Posterior vena cava (tissue), 2 donors: ENCODE measurements at regions of chr2 and their contacts with region 1.

Region 1: GRCh38 chr2:62369496-62370202 is 136.3 kb downstream of the TMEM17 start:
- DNase-seq: no peak

Region 2: DNA sequence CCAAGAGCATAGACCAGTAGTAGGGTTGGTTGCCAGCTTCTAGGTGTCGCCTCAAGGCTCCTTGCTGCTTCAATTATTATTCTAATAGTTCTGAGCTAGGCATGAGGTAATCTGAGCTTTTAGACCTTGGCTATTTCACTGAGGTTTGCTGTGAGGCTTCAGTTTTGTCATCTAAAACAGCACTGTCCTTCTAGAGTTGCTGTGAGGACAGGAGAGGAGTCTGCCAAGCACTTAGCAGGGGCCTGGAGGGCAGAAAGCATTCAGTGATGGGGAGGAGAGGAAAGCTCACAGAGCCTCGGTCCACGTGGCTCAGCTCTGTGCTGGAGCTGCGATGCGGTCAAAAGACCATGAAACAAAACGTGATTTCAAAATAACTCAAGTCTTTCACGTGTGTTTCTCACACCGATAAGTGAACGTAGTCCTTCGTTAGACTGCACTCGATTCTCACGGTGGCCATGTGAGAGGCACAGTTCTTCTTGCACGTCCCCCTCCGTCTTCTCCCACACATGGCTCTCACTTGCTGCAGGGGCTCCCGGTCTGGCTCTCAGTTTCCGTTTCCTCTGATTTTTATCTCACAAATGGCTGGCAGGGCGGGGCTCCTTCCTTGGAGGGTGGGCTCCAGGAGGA is 60.1 kb before region 1 on chr2:
- intact Hi-C with region 1: no loop called
- DNase-seq: no peak

Region 3: GRCh38 chr2:62406573-62407043 is 37.0 kb after region 1 on chr2:
- intact Hi-C with region 1: no loop called
- DNase-seq: no peak

Region 4: DNA sequence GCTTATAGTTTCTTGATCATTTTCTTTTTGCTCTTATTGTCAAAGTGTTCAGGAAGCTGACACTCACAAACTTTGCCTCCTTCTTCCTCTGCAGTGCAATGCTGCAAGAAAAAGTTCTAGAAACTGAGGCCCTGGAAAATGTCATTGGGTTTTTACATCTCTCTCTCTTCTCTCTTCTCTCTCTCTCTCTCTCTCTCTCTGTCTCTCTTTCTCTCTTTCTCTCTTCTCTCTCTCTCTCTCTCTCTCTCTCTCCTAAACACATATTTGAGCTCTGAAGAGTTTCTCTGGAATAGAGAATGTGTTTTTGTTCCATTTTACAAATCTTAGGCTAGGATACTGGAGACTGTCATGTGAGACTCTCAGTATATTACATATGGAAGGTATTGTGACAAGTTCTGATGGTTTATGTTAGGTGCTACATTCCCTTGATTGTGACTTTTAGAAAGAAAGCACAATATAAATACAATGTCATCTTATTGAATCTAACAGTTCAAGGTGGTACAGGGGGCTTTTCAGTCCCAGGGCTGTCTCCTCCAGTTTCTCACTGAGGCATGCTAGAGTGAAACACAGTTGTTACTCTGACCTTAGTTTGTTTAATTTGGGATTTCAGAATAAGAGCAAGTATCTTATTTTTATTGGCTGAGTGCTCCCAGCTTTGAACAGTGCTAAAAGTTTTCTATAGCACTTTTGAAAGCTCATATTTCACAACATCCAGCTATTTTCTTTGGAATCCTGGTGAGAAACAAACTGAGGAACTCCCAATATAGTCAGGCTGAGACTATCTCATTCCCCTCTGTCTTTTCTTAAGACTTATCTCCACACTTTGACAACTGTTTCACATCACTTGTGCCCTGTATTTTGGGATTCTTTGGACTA is 294.5 kb after region 1 on chr2:
- intact Hi-C with region 1: loop called in 1 of 2 experiments (anchors 2 kb)
- DNase-seq: no peak